ENCODE measurements at regions of chr7 and their contacts with region 1.

Region 1: DNA sequence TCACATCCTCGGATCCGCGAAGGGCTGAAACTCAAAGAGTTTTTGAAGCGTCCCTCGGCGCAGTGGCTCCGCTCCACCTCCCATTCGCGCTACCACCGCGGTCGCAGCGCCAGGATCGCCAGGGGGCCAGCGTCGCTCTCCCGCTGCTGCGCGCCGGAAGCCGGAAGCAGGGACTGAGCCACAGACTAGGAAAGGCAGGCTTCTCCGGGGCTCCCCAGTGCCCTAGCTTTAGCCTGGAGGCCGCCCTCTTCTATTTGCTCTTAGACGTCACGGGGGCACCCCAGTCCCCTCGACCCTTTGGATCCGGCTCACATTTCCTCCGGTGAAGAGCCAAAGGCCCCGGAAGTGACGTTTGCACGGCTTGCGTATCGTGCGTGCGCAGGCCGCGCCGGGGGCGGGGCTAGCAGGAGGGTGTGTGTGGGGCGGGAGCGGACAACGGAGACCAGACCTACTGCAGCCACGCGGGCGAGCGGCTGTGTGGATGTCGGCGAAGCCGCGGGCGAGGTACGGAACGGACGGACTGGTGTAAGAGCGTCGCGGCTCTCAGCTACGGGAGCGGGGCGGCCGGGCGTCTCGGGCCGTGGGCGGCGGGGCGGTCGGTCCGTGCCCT is 25.5 kb downstream of the KCTD7 start:
- DNase-seq: peak; percentile 98
- H3K4me3 Mint-ChIP-seq: peak overlapping the region; percentile 94
- H3K27ac Mint-ChIP-seq: peak overlapping the region; percentile 94
- H3K4me1 Mint-ChIP-seq: peaks cover 15% of the 10 kb centered on the region
- H3K27me3 Mint-ChIP-seq: no peaks in the 10 kb centered on the region

Region 2: GRCh38 chr7:66413379-66414114 is 240.7 kb before region 1 on chr7:
- intact Hi-C with region 1: loop called (anchors 1 kb)
- DNase-seq: peak; percentile 80
- H3K4me3 Mint-ChIP-seq: peak overlapping the region; percentile 72
- H3K27ac Mint-ChIP-seq: peak overlapping the region; percentile 40
- H3K4me1 Mint-ChIP-seq: peaks cover 7% of the 10 kb centered on the region
- H3K27me3 Mint-ChIP-seq: no peaks in the 10 kb centered on the region

Region 3: DNA sequence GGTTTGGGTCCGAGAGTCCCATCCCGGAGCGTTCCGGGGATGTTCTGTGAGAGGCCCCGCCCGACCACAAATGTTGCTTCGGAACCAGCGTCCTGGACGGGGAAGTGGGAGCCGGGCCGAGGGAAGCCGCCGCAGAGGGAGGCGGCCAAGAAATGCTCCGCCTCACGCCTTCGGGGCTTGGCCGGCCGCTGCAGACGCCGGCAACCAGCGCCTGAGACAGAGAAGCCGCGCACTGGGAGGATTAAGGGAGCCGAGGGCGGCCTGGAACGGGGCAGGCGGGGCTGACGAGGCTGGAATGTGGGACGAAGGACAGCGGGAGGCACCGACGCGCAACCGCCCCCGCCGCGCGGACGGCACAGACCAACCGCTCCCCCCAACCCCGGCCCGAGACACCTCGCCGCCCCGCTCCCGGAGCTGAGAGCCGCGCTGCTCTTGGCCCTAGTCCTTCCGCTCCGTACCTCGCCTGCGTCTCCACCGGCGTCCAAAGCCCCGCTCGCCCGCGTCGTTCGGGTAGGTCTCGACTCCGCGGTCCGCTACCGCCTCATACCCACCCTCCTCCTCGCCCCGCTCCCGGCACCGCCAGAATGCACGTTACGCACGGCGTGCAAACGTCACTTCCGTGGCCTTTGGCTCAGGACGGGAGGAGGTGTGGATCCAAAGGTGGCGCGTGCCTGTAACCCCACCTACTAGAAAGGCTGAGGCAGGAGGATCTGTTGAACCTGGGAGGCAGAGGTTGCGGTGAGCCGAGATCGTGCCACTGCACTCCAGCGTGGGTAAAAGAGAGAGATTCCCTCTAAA is 62.2 kb before region 1 on chr7:
- intact Hi-C with region 1: loop called (anchors 1 kb)
- DNase-seq: peak; percentile 87
- H3K4me3 Mint-ChIP-seq: peak overlapping the region; percentile 96
- H3K27ac Mint-ChIP-seq: peak overlapping the region; percentile 93
- H3K4me1 Mint-ChIP-seq: peaks cover 46% of the 10 kb centered on the region
- H3K27me3 Mint-ChIP-seq: peaks cover 3% of the 10 kb centered on the region

Region 4: GRCh38 chr7:66628361-66629140 is 25.7 kb before region 1 on chr7 and contains the start of gene KCTD7:
- intact Hi-C with region 1: loop called (anchors 1 kb)
- DNase-seq: peak; percentile 94
- H3K4me3 Mint-ChIP-seq: peak within 1 kb of the TSS; percentile 90
- H3K27ac Mint-ChIP-seq: peak within 1 kb of the TSS; percentile 83
- H3K4me1 Mint-ChIP-seq: peaks cover 39% of the 10 kb centered on the region
- H3K27me3 Mint-ChIP-seq: no peaks in the 10 kb centered on the region
- total RNA-seq, gene KCTD7: 11.0 and 13.8 TPM in 2 replicates

Region 5: DNA sequence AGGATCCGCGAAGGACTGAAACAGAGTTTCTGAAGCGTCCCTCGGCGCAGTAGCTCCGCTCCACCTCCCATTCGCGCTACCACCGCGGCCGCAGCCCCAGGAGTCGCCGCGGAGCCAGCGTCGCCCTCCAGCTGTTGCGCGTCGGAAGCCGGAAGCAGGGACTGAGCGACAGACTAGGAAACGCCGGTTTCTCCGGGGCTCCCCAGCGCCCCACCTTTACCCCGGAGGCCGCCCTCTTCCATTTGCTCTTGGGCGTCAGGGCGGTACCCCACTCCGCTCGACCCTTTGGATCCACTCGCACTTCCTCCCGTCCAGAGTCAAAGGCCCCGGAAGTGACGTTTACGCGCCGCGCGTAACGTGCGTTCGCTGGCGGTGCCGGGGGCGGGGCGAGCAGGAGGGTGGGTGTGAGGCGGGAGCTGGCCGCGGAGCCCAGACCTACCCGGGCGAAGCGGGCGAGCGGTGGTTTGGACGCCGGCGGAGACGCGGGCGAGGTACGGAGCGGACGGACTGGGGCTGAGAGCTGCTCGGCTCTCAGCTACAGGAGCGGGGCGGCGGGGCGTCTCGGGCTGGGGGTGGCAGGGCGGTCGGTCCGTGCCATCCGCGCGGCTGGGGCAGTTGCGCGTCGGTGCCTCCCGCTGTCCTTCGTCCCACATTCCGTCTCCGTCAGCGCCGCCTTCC is 86.2 kb after region 1 on chr7 and contains the start of gene RABGEF1:
- intact Hi-C with region 1: loop called (anchors 1 kb)
- DNase-seq: peak; percentile 98
- H3K4me3 Mint-ChIP-seq: peak within 1 kb of the TSS; percentile 95
- H3K27ac Mint-ChIP-seq: peak within 1 kb of the TSS; percentile 94
- H3K4me1 Mint-ChIP-seq: peaks cover 15% of the 10 kb centered on the region
- H3K27me3 Mint-ChIP-seq: no peaks in the 10 kb centered on the region
- total RNA-seq, gene RABGEF1: 26.7 and 27.8 TPM in 2 replicates

Region 6: DNA sequence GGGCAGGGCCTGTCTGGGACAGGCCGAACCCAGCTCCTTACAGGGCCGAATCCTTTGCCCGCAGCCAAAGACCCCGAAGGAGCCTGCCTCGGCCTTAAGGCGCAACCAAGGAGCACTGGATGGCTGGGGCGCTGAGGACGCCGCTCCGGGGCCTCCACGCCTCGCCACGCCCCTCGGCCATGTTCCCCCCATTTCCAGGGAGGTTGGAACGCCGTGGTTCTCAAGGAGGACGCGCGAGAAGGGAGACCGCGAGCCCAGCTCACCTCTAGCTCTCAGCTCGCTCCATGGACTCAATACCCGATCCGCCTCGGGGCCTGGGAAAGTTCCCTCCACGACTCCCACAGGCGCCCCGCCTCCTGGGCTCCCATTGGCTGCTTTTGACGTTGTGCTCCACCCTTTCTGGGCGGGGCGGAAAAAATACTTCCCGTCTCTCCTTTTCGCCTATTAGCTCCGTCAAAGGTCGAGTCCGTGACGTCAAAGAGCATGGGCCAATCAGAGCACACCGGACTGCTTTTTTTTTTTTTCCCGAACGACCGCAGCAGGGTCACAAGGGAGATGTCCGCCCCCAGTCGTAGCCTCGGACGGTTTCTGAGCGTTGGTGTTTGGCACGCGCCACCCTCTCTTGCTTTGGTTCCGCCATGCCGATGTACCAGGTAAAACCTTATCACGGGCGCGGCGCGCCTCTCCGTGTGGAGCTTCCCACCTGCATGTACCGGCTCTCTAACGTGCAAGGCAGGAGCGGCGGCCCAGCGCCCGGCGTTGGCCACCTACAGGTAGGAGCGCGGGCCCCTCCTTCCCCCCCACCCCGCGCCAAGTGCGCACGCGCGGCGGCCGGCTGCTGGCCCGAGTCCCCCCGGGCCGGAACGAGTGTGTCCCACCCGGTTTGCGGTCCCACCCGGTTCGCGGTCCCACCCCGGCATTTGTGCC is 648.1 kb after region 1 on chr7:
- intact Hi-C with region 1: loop called (anchors 10 kb)
- DNase-seq: peak; percentile 97
- H3K4me3 Mint-ChIP-seq: peak overlapping the region; percentile 88
- H3K27ac Mint-ChIP-seq: peak overlapping the region; percentile 91
- H3K4me1 Mint-ChIP-seq: peaks cover 21% of the 10 kb centered on the region
- H3K27me3 Mint-ChIP-seq: peaks cover 4% of the 10 kb centered on the region